ENCODE measurements at regions of chr21 and their contacts with region 1.

Region 1: DNA sequence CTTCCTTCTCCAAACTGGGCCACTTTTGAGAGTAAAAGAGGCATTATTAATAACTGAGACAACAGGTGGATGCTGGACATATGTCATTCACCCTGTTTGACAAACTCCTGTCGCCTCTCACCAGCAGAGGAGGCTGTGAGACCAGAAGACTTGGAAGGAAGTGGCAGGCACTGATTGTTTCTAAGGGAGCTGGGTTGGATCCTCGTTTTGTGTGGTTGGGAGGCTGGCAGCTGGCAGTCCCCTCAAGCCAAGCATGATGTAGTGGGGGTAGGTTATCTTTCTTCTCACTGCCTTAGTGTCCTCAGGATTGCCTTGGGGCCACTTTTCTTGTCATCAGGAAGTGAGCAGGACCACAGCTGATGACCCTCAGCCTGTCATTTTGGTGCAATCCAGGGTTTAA is 86.5 kb upstream of the KCNJ15 start:
- DNase-seq: peak; percentile 12
- ATAC-seq: no peak
- H3K4me3 ChIP-seq: no peak overlapping the region
- H3K27ac ChIP-seq: no peak overlapping the region; the same call in 1 of the 2 replicates
- H3K4me1 ChIP-seq: peaks cover 15% of the 10 kb centered on the region
- H3K27me3 ChIP-seq: peaks cover 4% of the 10 kb centered on the region; the same call in 1 of the 2 replicates
- CTCF ChIP-seq: peak; percentile 44
- POLR2A ChIP-seq: no peak
- RAD21 ChIP-seq: peak; percentile 62

Region 2: DNA sequence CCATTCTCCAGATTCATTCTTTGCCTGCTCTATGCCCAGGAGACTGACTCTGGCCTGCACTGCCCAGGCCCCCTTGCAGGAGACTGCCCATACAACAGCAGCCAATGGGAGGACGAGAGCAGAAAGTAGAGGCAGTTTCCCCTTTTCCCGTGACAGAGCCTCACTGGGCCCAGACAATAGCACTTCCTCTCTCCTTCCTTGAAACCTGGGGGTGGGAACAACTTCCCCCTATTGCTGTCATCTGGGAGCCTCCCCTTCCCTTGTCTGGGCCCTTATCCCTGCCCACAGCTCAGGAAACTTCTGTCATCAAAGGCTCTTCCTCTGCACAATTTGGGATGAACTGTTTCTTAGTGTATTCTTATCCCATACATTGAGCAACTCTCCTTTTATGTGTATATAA is 25.8 kb after region 1 on chr21:
- CTCF ChIA-PET with region 1: no interaction called
- POLR2A ChIA-PET with region 1: interaction called, 11 read pairs
- dilution Hi-C with region 1: no loop called
- in situ Hi-C with region 1: no loop called
- intact Hi-C with region 1: no loop called
- DNase-seq: no peak
- ATAC-seq: no peak
- H3K4me3 ChIP-seq: no peak overlapping the region
- H3K27ac ChIP-seq: no peak overlapping the region
- H3K4me1 ChIP-seq: no peaks in the 10 kb centered on the region
- H3K27me3 ChIP-seq: peaks cover 1% of the 10 kb centered on the region
- CTCF ChIP-seq: no peak
- POLR2A ChIP-seq: no peak
- RAD21 ChIP-seq: no peak

Region 3: DNA sequence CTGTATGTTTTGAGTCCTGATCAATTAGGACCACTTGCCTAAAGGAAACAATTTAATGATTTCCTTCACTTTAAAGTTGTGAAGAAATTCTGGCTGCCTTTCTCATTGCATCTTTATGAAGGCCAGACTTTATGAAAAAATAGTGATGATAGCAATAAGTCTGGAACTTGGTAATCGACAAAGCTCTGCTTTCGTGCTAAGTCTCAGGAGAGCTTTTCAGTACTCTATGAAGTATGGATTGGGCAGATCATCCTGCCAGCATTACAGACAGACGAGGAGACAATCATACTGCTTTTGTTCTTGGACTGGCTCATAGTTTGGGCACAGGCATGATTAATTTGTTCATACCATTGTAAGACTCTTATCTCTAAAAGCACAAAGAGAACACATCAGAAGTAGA is 41.0 kb after region 1 on chr21:
- CTCF ChIA-PET with region 1: interaction called, 3 read pairs
- POLR2A ChIA-PET with region 1: no interaction called
- dilution Hi-C with region 1: no loop called
- in situ Hi-C with region 1: loop called (anchors 5 kb)
- intact Hi-C with region 1: loop called (anchors 5 kb)
- DNase-seq: no peak
- ATAC-seq: no peak
- H3K4me3 ChIP-seq: no peak overlapping the region
- H3K27ac ChIP-seq: no peak overlapping the region
- H3K4me1 ChIP-seq: no peaks in the 10 kb centered on the region
- H3K27me3 ChIP-seq: peaks cover 30% of the 10 kb centered on the region
- CTCF ChIP-seq: no peak
- POLR2A ChIP-seq: no peak
- RAD21 ChIP-seq: no peak